ENCODE measurements at regions of chr19 and their contacts with region 1.

Region 1: DNA sequence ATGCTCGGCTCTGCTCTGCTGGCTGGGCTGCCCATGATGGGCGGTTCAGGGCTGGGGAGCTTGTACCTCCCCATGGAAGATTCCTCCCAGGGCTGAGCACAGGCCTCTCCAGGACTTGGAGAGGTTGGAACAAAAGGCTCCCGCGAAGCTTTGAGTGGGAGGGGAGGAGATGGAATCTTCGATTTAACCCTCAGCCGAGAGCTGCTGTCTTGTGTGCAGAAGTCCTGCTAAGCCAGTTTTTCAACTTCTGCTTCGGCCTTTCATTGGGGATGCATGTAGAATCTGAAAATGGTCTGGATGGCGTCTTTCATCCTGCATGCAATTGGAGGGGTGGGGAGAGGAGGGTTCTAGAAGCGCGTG is 163.3 kb downstream of the KDM4B start:
- DNase-seq: peak; percentile 56 to 71
- H3K4me3 ChIP-seq: no peak overlapping the region
- H3K4me3 Mint-ChIP-seq: no peak overlapping the region
- H3K27ac Mint-ChIP-seq: no peak overlapping the region
- H3K4me1 ChIP-seq: peaks cover 11% of the 10 kb centered on the region
- H3K4me1 Mint-ChIP-seq: peaks cover 10% of the 10 kb centered on the region
- H3K27me3 ChIP-seq: no peaks in the 10 kb centered on the region
- H3K27me3 Mint-ChIP-seq: no peaks in the 10 kb centered on the region
- CTCF ChIP-seq: no peak

Region 2: GRCh38 chr19:5099701-5100221 is 32.4 kb before region 1 on chr19:
- CTCF ChIA-PET with region 1: no interaction called
- POLR2A ChIA-PET with region 1: no interaction called
- intact Hi-C with region 1: no loop called
- DNase-seq: no peak
- H3K4me3 ChIP-seq: no peak overlapping the region
- H3K4me3 Mint-ChIP-seq: no peak overlapping the region
- H3K27ac Mint-ChIP-seq: no peak overlapping the region
- H3K4me1 ChIP-seq: peaks cover 3% of the 10 kb centered on the region; the same call in 1 of the 2 replicates
- H3K4me1 Mint-ChIP-seq: no peaks in the 10 kb centered on the region
- H3K27me3 ChIP-seq: no peaks in the 10 kb centered on the region
- H3K27me3 Mint-ChIP-seq: no peaks in the 10 kb centered on the region
- CTCF ChIP-seq: no peak

Region 3: DNA sequence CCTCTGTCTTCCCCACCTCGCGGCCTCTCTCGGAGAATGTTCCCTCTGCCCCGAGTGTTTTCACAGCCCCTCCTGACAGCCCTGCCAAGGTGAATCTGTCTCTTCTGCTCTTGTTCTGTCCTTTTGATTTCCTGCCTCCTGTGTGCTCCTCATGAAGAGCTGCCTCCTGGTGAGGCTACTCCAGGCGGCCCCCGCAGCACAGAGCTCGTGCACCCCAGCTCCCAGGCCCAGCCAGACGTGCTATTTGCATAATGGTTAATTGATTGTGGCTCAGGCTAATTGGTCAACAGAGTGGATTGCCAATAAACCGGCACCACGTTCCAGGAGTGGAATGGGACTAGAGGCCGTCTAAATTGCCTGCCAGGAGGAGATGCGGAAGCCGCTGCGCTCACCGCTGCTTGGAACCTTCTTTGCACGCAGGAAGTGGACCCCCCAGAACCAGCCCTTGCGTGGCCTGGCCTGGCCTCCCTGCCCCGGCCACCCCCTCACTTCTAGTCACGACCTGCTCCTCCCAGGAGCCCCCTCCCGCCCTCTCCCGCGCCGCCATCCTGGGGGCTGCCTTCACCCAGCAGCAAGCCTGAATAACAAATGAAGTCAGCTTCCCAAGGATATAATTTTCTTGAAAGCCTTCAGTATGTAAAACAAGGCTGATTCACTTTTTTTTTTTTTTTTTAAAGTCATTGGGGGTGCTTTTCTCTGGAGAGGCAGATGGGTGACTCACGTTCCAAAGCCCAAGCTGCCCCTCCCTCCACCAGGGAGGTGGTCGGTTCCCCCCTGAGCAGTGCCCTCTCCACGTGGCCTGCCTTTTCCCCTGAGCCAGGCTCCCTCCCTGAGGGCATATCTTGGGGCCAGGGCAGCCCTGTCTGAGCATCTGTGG is 19.3 kb before region 1 on chr19:
- CTCF ChIA-PET with region 1: no interaction called
- POLR2A ChIA-PET with region 1: no interaction called
- intact Hi-C with region 1: no loop called
- DNase-seq: no peak
- H3K4me3 ChIP-seq: no peak overlapping the region
- H3K4me3 Mint-ChIP-seq: no peak overlapping the region
- H3K27ac Mint-ChIP-seq: no peak overlapping the region
- H3K4me1 ChIP-seq: no peaks in the 10 kb centered on the region
- H3K4me1 Mint-ChIP-seq: no peaks in the 10 kb centered on the region
- H3K27me3 ChIP-seq: no peaks in the 10 kb centered on the region
- H3K27me3 Mint-ChIP-seq: no peaks in the 10 kb centered on the region
- CTCF ChIP-seq: no peak

Region 4: GRCh38 chr19:5143471-5144411 is 11.6 kb after region 1 on chr19:
- CTCF ChIA-PET with region 1: no interaction called
- POLR2A ChIA-PET with region 1: no interaction called
- intact Hi-C with region 1: loop called (anchors 1 kb)
- DNase-seq: no peak
- H3K4me3 ChIP-seq: no peak overlapping the region
- H3K4me3 Mint-ChIP-seq: no peak overlapping the region
- H3K27ac Mint-ChIP-seq: no peak overlapping the region
- H3K4me1 ChIP-seq: no peaks in the 10 kb centered on the region
- H3K4me1 Mint-ChIP-seq: no peaks in the 10 kb centered on the region
- H3K27me3 ChIP-seq: no peaks in the 10 kb centered on the region
- H3K27me3 Mint-ChIP-seq: no peaks in the 10 kb centered on the region
- CTCF ChIP-seq: no peak

Region 5: GRCh38 chr19:5186293-5187050 is 54.3 kb after region 1 on chr19:
- CTCF ChIA-PET with region 1: no interaction called
- POLR2A ChIA-PET with region 1: no interaction called
- intact Hi-C with region 1: no loop called
- DNase-seq: no peak
- H3K4me3 ChIP-seq: no peak overlapping the region
- H3K4me3 Mint-ChIP-seq: no peak overlapping the region
- H3K27ac Mint-ChIP-seq: no peak overlapping the region
- H3K4me1 ChIP-seq: no peaks in the 10 kb centered on the region
- H3K4me1 Mint-ChIP-seq: no peaks in the 10 kb centered on the region
- H3K27me3 ChIP-seq: no peaks in the 10 kb centered on the region
- H3K27me3 Mint-ChIP-seq: peaks cover 4% of the 10 kb centered on the region
- CTCF ChIP-seq: no peak

Measured in Caco-2 (cell line).